Activated CD4-positive, alpha-beta T cell treated with anti-CD3 and anti-CD28 coated beads for 36 hours (primary cell): ENCODE measurements at regions of chr7 and their contacts with region 1.

Region 1: GRCh38 chr7:32846701-32847100 is 44.9 kb downstream of the KBTBD2 start:
- DNase-seq: peak; percentile 95
- ATAC-seq: peak; percentile 100
- H3K4me3 Mint-ChIP-seq: no peak overlapping the region
- H3K27ac Mint-ChIP-seq: no peak overlapping the region
- H3K4me1 Mint-ChIP-seq: peaks cover 7% of the 10 kb centered on the region
- H3K27me3 Mint-ChIP-seq: peaks cover 19% of the 10 kb centered on the region

Region 2: GRCh38 chr7:32680259-32681173 is 166.2 kb before region 1 on chr7:
- CTCF ChIA-PET with region 1: no interaction called
- POLR2A ChIA-PET with region 1: no interaction called
- intact Hi-C with region 1: no loop called
- DNase-seq: no peak
- ATAC-seq: no peak
- H3K4me3 Mint-ChIP-seq: no peak overlapping the region
- H3K27ac Mint-ChIP-seq: no peak overlapping the region
- H3K4me1 Mint-ChIP-seq: peaks cover 8% of the 10 kb centered on the region
- H3K27me3 Mint-ChIP-seq: peaks cover 5% of the 10 kb centered on the region

Region 3: GRCh38 chr7:32858648-32859047 is 11.9 kb after region 1 on chr7:
- CTCF ChIA-PET with region 1: interaction called, 19 read pairs
- POLR2A ChIA-PET with region 1: no interaction called
- intact Hi-C with region 1: no loop called
- DNase-seq: no peak
- ATAC-seq: peak; percentile 57
- H3K4me3 Mint-ChIP-seq: no peak overlapping the region
- H3K27ac Mint-ChIP-seq: no peak overlapping the region
- H3K4me1 Mint-ChIP-seq: peaks cover 14% of the 10 kb centered on the region
- H3K27me3 Mint-ChIP-seq: peaks cover 21% of the 10 kb centered on the region

Region 4: GRCh38 chr7:32879460-32879859 is 32.8 kb after region 1 on chr7:
- CTCF ChIA-PET with region 1: interaction called, 34 read pairs
- POLR2A ChIA-PET with region 1: interaction called, 4 read pairs
- intact Hi-C with region 1: no loop called
- DNase-seq: no peak
- ATAC-seq: peak; percentile 83
- H3K4me3 Mint-ChIP-seq: no peak overlapping the region
- H3K27ac Mint-ChIP-seq: no peak overlapping the region
- H3K4me1 Mint-ChIP-seq: peaks cover 49% of the 10 kb centered on the region
- H3K27me3 Mint-ChIP-seq: no peaks in the 10 kb centered on the region

Region 5: DNA sequence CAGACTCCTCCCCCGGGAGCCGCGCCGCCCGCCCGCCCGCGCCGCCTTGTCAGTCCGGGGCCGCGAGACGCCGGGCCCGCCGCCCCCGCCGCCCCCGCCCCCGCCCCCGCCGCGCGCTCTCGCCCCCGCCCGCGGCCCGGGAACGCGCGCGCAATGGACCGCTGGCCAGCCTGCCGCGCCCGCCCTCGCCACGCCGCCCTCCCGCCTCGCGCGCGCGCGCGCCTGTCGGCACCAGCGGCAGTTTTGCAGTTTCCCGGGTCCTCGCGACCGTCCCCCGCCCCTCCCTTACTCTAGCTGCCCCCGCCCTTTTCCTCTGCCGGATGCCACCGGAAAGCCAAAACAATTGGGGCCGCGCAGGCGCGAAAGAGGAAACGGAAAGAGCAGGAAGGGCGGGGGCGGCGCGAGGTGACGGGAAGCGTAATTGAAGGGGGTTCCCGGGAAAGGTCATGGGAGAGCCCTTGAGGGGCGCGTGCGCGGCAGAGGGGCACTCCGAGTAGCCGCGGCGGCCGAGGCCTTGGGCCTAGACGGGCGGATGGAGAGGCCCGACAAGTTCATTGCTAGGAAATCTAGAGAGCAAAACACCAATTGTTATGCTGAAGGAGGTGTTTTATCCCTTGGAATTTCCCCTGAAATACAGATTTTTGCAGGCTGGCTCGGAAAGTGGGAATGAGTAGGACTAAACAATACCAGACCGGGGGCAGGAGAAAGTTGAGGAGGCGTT is 45.3 kb after region 1 on chr7:
- CTCF ChIA-PET with region 1: interaction called, 18 read pairs
- POLR2A ChIA-PET with region 1: interaction called, 4 read pairs
- intact Hi-C with region 1: loop called (anchors 2 to 5 kb)
- DNase-seq: peak; percentile 99
- ATAC-seq: peak; percentile 67
- H3K4me3 Mint-ChIP-seq: peak overlapping the region; percentile 94
- H3K27ac Mint-ChIP-seq: peak overlapping the region; percentile 99
- H3K4me1 Mint-ChIP-seq: peaks cover 44% of the 10 kb centered on the region
- H3K27me3 Mint-ChIP-seq: no peaks in the 10 kb centered on the region

Region 6: GRCh38 chr7:32957326-32958045 is 110.8 kb after region 1 on chr7 and contains the start of gene FKBP9:
- CTCF ChIA-PET with region 1: no interaction called
- POLR2A ChIA-PET with region 1: no interaction called
- intact Hi-C with region 1: loop called in 1 of 2 experiments (anchors 5 kb)
- DNase-seq: peak; percentile 52
- ATAC-seq: peak; percentile 74
- H3K4me3 Mint-ChIP-seq: peak within 1 kb of the TSS; percentile 74
- H3K27ac Mint-ChIP-seq: peak within 1 kb of the TSS; percentile 21
- H3K4me1 Mint-ChIP-seq: peaks cover 5% of the 10 kb centered on the region
- H3K27me3 Mint-ChIP-seq: peaks cover 24% of the 10 kb centered on the region
- total RNA-seq, gene FKBP9: 0.37 to 1.0 TPM

Region 7: GRCh38 chr7:33040803-33041516 is 194.3 kb after region 1 on chr7:
- CTCF ChIA-PET with region 1: interaction called, 18 read pairs
- POLR2A ChIA-PET with region 1: no interaction called
- intact Hi-C with region 1: no loop called
- DNase-seq: peak; percentile 79
- ATAC-seq: peak; percentile 99
- H3K4me3 Mint-ChIP-seq: peak overlapping the region; percentile 66
- H3K27ac Mint-ChIP-seq: peak overlapping the region; percentile 77
- H3K4me1 Mint-ChIP-seq: peaks cover 62% of the 10 kb centered on the region
- H3K27me3 Mint-ChIP-seq: no peaks in the 10 kb centered on the region

Region 8: GRCh38 chr7:33050535-33051318 is 204.0 kb after region 1 on chr7:
- CTCF ChIA-PET with region 1: interaction called, 12 read pairs
- POLR2A ChIA-PET with region 1: no interaction called
- intact Hi-C with region 1: loop called (anchors 1 to 5 kb)
- DNase-seq: peak; percentile 30
- ATAC-seq: peak; percentile 60
- H3K4me3 Mint-ChIP-seq: no peak overlapping the region
- H3K27ac Mint-ChIP-seq: no peak overlapping the region
- H3K4me1 Mint-ChIP-seq: peaks cover 49% of the 10 kb centered on the region
- H3K27me3 Mint-ChIP-seq: no peaks in the 10 kb centered on the region